SK-N-SH (cell line): ENCODE measurements at regions of chr14 and their contacts with region 1.

Region 1: GRCh38 chr14:75577729-75578101 is 705 bp upstream of the FLVCR2 start:
- DNase-seq: peak; percentile 87
- H3K4me3 ChIP-seq: peak overlapping the region; percentile 57 to 82
- H3K27ac ChIP-seq: no peak overlapping the region
- H3K4me1 ChIP-seq: peaks cover 0 to 11% of the 10 kb centered on the region in 2 experiments; a peak in 1 of 4 replicates
- H3K27me3 ChIP-seq: peaks cover 35% of the 10 kb centered on the region
- CTCF ChIP-seq: peak; percentile 77
- EP300 ChIP-seq: no peak
- RAD21 ChIP-seq: peak; percentile 89

Region 2: GRCh38 chr14:75411214-75411540 is 166.5 kb before region 1 on chr14:
- CTCF ChIA-PET with region 1: no interaction called
- POLR2A ChIA-PET with region 1: no interaction called
- DNase-seq: no peak
- H3K4me3 ChIP-seq: no peak overlapping the region
- H3K27ac ChIP-seq: no peak overlapping the region
- H3K4me1 ChIP-seq: peaks cover 0 to 2% of the 10 kb centered on the region in 2 experiments; a peak in 1 of 4 replicates
- H3K27me3 ChIP-seq: peaks cover 9% of the 10 kb centered on the region; the same call in 1 of the 2 replicates
- CTCF ChIP-seq: no peak
- EP300 ChIP-seq: no peak
- RAD21 ChIP-seq: no peak

Region 3: DNA sequence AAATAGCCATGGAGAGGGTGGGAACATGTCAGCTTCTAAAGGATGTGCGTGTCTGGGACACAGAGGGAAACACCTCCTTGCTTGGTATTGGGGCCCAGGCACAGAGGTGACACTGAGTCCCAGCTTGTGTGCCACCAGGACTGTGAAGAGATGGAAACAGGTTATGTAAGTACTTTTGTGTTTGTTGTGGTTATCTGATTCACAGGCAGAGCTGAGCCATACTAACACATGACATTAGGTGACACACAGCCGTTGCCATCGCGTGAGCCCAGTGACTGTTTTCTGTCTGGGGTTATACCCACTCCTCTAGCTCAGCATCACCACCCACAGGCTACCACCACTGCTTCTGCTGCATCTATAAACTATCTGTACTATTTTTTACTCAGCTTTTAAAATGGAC is 11.4 kb before region 1 on chr14:
- CTCF ChIA-PET with region 1: interaction called, 113 read pairs
- POLR2A ChIA-PET with region 1: interaction called, 3 read pairs
- DNase-seq: no peak
- H3K4me3 ChIP-seq: no peak overlapping the region
- H3K27ac ChIP-seq: no peak overlapping the region
- H3K4me1 ChIP-seq: no peaks in the 10 kb centered on the region
- H3K27me3 ChIP-seq: peaks cover 26% of the 10 kb centered on the region; the same call in 1 of the 2 replicates
- CTCF ChIP-seq: no peak
- EP300 ChIP-seq: no peak
- RAD21 ChIP-seq: no peak

Region 4: DNA sequence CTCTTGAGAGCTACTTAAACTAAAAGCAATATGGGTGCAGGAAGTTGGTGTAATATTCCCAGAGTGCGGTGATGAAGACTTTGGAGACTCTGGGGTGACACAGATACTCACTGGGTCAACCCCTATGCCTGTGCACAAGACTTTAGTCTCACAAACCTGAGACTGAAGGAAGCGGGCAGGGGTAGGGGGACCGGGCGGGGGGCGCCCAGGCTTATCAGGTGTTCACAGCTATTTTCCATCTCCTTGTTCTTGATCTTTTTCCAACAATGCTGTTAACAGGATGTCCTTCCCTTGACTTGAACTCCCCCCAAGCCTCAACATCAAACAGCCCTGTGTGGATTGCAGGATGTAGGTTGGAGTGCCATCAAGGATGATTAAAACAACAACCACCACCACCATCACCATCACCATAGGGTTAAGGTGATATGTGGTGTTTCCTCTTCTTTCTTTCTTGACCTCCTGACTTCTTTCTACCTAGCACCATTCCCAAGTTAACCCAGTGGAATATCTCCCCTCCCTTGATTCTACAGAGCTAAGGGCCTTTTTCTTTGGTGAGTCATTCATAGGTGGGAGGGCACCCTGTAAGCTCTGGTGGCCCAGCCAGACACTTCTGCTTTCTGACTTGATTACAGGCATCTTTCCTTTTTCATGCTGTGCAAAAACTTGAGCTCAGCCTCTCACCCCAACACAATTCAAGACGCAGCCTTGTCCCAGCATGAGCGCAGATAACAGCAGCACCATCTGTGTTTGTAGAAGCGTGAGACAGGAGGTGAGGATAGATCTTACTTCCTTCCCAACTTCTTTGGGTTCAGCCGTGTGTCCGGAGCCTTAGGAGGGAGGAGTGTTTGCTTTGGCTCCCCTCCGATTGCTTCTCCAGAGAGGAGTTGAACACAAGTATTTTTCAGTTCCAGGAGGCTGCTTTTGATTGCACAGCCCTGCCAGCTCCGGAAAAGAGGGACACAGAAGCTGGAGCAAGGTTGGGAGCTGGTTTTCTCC is 27.4 kb after region 1 on chr14:
- CTCF ChIA-PET with region 1: interaction called, 15 read pairs
- POLR2A ChIA-PET with region 1: no interaction called
- DNase-seq: no peak
- H3K4me3 ChIP-seq: no peak overlapping the region
- H3K27ac ChIP-seq: no peak overlapping the region
- H3K4me1 ChIP-seq: no peaks in the 10 kb centered on the region; a peak in 1 of 4 replicates
- H3K27me3 ChIP-seq: peaks cover 29% of the 10 kb centered on the region; the same call in 1 of the 2 replicates
- CTCF ChIP-seq: no peak
- EP300 ChIP-seq: no peak
- RAD21 ChIP-seq: no peak

Region 5: DNA sequence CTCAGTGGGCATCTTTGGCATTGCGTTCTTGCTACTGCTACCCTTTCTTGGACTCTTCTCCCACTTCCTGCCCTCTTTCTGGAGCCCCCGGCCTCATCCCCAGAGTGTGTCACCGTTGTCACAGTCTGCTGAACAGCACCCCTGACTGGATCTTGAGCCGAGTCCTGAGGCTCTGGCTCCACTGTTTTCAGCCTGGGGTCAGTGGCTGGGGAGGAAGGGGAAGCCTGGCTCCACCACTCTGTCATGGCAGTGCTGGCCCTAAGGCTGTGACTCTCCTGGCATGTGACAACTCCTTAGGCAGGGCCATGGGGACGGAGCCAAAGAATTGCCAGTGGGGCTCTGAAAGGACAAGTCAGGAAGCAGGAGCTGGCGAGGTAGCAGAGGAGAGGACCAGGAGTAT is 64.3 kb after region 1 on chr14:
- CTCF ChIA-PET with region 1: interaction called, 38 read pairs
- POLR2A ChIA-PET with region 1: no interaction called
- DNase-seq: no peak
- H3K4me3 ChIP-seq: no peak overlapping the region
- H3K27ac ChIP-seq: no peak overlapping the region
- H3K4me1 ChIP-seq: no peaks in the 10 kb centered on the region
- H3K27me3 ChIP-seq: no peaks in the 10 kb centered on the region
- CTCF ChIP-seq: no peak
- EP300 ChIP-seq: no peak
- RAD21 ChIP-seq: no peak

Region 6: DNA sequence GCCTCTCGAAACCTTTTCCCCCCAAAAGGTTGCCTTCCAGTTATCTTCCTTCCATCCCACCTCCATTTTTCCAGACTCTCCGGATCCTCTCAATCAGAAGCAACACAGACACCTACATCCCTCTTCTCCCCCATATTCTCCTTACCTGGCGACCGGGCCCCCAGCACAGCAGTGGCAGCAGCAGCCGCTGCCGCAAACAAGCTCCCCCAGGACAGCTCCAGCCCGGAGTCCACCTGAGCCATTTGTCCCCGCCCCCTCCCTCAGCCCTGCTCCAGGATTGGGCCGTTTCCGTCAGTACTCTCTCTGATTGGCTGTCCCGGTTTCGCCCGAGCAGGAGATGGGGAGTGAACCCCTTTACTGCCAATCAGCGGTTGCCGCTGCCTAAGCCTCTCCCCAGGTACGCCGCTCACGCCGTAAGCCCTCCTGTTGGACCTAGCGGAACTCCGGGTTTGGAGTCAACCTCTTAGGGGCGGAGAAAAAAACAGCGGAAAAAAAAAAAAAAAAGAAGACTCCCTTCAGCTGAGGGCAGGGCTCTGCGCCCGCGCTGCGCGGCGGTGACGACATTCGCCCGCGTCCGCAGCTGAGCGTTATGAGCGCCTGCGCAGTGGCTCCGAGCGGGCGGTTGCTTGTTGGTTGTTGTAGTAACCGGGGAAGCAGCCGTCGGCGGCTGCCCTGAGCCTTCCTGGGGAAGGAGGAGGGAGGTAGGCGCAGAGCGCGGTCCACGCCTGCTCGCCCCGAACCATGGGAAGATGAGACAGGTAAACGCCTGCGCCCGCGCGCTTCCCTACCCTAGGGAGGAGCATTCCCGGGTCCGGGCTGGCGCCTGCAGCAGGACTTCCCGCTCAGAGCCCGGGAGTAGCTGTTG is 83.1 kb after region 1 on chr14 and contains the starts of genes ERG28 and TTLL5:
- CTCF ChIA-PET with region 1: interaction called, 439 read pairs
- POLR2A ChIA-PET with region 1: no interaction called
- DNase-seq: peak; percentile 95
- H3K4me3 ChIP-seq: peak within 1 kb of the TSS; percentile 80 to 94
- H3K27ac ChIP-seq: peak within 1 kb of the TSS; percentile 73 to 79
- H3K4me1 ChIP-seq: peaks cover 0 to 9% of the 10 kb centered on the region in 2 experiments; a peak in 2 of 4 replicates
- H3K27me3 ChIP-seq: no peaks in the 10 kb centered on the region
- CTCF ChIP-seq: no peak
- EP300 ChIP-seq: no peak
- RAD21 ChIP-seq: no peak
- polyA plus RNA-seq, gene ERG28: 14.8 and 17.0 TPM in 2 replicates
- polyA plus RNA-seq, gene TTLL5: 9.6 and 11.7 TPM in 2 replicates

Region 7: GRCh38 chr14:75757644-75758402 is 180.1 kb after region 1 on chr14:
- CTCF ChIA-PET with region 1: no interaction called
- POLR2A ChIA-PET with region 1: no interaction called
- DNase-seq: no peak
- H3K4me3 ChIP-seq: no peak overlapping the region
- H3K27ac ChIP-seq: no peak overlapping the region
- H3K4me1 ChIP-seq: no peaks in the 10 kb centered on the region; a peak in 1 of 4 replicates
- H3K27me3 ChIP-seq: no peaks in the 10 kb centered on the region
- CTCF ChIP-seq: no peak
- EP300 ChIP-seq: no peak
- RAD21 ChIP-seq: no peak

Region 8: GRCh38 chr14:75811872-75812499 is 234.3 kb after region 1 on chr14:
- CTCF ChIA-PET with region 1: no interaction called
- POLR2A ChIA-PET with region 1: no interaction called
- DNase-seq: peak; percentile 9
- H3K4me3 ChIP-seq: no peak overlapping the region
- H3K27ac ChIP-seq: no peak overlapping the region
- H3K4me1 ChIP-seq: peaks cover 0 to 4% of the 10 kb centered on the region in 2 experiments; a peak in 1 of 4 replicates
- H3K27me3 ChIP-seq: no peaks in the 10 kb centered on the region
- CTCF ChIP-seq: no peak
- EP300 ChIP-seq: no peak
- RAD21 ChIP-seq: no peak

Region 9: DNA sequence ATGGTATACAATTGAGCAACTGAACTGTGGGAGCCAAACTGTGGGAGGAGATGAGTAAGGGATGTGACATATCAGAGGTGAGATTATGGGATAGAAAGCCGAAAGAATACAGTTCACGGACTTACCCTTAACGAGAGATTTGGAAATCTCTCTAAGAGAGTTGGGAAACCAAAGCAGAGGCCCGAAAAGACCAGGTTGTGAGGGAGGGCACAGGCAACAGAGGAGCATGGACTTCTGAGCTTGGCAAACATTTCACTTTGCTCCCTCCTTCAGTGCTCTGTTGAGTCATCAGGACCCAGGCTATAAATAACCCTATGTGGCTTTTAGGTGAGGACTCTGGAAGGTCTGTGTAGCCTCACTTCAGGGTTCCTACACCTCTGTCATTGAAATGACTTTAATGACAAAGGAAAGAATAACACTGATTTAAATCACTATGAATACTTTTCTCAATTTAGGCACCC is 283.5 kb after region 1 on chr14:
- CTCF ChIA-PET with region 1: no interaction called
- POLR2A ChIA-PET with region 1: no interaction called
- DNase-seq: no peak
- H3K4me3 ChIP-seq: no peak overlapping the region
- H3K27ac ChIP-seq: peak overlapping the region; percentile 19 to 52
- H3K4me1 ChIP-seq: peaks cover 0 to 34% of the 10 kb centered on the region in 2 experiments; a peak in 3 of 4 replicates
- H3K27me3 ChIP-seq: no peaks in the 10 kb centered on the region
- CTCF ChIP-seq: no peak
- EP300 ChIP-seq: peak in 1 of 2 experiments; percentile 65; a peak in 2 of 4 replicates
- RAD21 ChIP-seq: no peak